Activated T-helper 1 cell treated with anti-CD3 and anti-CD28 coated beads, Interleukin-12 subunit alpha, Interleukin-12 subunit beta, Interleukin-2, Interleukin-4 antibody, amounts not matched to agents 30 ng/mL and 10 ng/mL and 1 ng/mL, durations not matched to agents 14 hours and 24 hours and 36 hours (primary cell): ENCODE measurements at regions of chr1 and their contacts with region 1.

Region 1: GRCh38 chr1:1919304-1920056 is 401 bp upstream of the TMEM52 start:
- DNase-seq: peak; percentile 99
- H3K4me3 Mint-ChIP-seq: peak overlapping the region; percentile 64
- H3K27ac Mint-ChIP-seq: peak overlapping the region; percentile 70
- H3K4me1 Mint-ChIP-seq: no peaks in the 10 kb centered on the region
- H3K27me3 Mint-ChIP-seq: peaks cover 2% of the 10 kb centered on the region

Region 2: DNA sequence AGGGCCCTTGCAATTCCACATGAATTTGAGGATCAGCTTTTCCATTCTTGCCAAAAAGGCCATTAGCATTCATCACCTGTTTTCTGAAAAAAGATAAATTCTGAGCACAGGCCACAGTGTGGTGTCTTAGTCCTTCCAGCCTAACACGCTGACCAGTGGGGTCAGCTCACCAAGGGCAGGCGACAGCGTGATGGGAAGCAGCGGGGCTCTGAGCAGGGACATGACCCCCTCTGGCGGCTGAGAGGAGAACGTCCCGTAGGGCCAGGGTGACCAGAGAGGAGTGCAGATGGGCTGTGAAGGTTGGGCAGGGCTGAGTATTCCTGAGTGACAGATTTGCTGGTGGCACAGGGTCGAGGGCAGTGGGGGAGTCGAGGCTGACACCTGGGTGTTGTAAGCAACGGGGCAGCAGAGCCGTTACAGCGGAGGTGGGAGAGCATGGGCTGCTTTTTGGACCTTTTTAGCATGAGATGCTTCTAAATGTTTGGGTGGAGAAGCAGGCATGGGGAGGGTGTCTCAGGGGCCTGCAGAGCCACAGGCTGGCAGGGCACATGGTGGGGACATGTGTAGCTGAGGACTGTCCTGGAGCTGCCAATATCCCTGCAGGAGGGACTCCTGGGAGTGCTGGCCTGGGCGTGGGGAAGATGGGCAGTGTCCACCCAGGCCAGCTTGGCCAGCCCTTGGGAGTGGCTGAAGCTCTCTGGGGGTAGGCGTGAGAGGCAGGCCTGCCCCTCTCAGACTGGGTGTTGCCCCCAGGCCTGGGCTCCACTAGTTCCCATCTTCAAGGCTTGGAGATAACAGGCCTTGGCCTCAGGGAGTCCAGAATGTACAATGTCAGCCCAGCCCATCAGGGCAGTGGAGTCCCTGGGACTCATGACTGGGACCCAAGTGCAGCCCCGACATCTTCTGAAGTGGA is 13.0 kb before region 1 on chr1:
- intact Hi-C with region 1: loop called (anchors 1 kb)
- DNase-seq: peak; percentile 61
- H3K4me3 Mint-ChIP-seq: peak overlapping the region; percentile 68
- H3K27ac Mint-ChIP-seq: peak overlapping the region; percentile 76
- H3K4me1 Mint-ChIP-seq: peaks cover 16% of the 10 kb centered on the region
- H3K27me3 Mint-ChIP-seq: peaks cover 2% of the 10 kb centered on the region

Region 3: GRCh38 chr1:2227346-2228153 is 308.1 kb after region 1 on chr1:
- intact Hi-C with region 1: loop called (anchors 1 kb)
- DNase-seq: peak; percentile 96
- H3K4me3 Mint-ChIP-seq: peak overlapping the region; percentile 73
- H3K27ac Mint-ChIP-seq: peak overlapping the region; percentile 80
- H3K4me1 Mint-ChIP-seq: peaks cover 26% of the 10 kb centered on the region
- H3K27me3 Mint-ChIP-seq: peaks cover 13% of the 10 kb centered on the region